ENCODE measurements at regions of chr19 and their contacts with region 1.

Region 1: GRCh38 chr19:44954824-44955586 is at the start of gene CLPTM1:
- DNase-seq: peak; percentile 91
- ATAC-seq: peak; percentile 85
- H3K4me3 ChIP-seq: peak within 1 kb of the TSS; percentile 93 to 100 (median 99)
- H3K27ac ChIP-seq: peak within 1 kb of the TSS; percentile 91
- H3K4me1 ChIP-seq: peaks cover 71% of the 10 kb centered on the region
- H3K27me3 ChIP-seq: no peaks in the 10 kb centered on the region; a peak in 1 of 5 replicates
- CTCF ChIP-seq: 0 out of 2 replicates have a peak, but pooled peaks have one; percentile 16
- EP300 ChIP-seq: peak in 1 of 2 experiments; percentile 5; a peak in 1 of 4 replicates
- POLR2A ChIP-seq: peak; percentile 77 to 85
- RAD21 ChIP-seq: no peak
- total RNA-seq, gene CLPTM1: 15.3 and 34.9 TPM in 2 replicates

Region 2: GRCh38 chr19:44845612-44846454 is 109.2 kb before region 1 on chr19 and contains the start of gene NECTIN2:
- CTCF ChIA-PET with region 1: no interaction called
- POLR2A ChIA-PET with region 1: interaction called, 6 read pairs
- in situ Hi-C with region 1: no loop called
- intact Hi-C with region 1: loop called (anchors 10 kb)
- DNase-seq: peak; percentile 95
- ATAC-seq: peak; percentile 61
- H3K4me3 ChIP-seq: peak within 1 kb of the TSS; percentile 76 to 95 (median 84)
- H3K27ac ChIP-seq: peak within 1 kb of the TSS; percentile 95
- H3K4me1 ChIP-seq: peaks cover 48% of the 10 kb centered on the region
- H3K27me3 ChIP-seq: no peaks in the 10 kb centered on the region; a peak in 1 of 5 replicates
- CTCF ChIP-seq: peak; percentile 94
- EP300 ChIP-seq: no peak
- POLR2A ChIP-seq: peak; percentile 62 to 87
- RAD21 ChIP-seq: peak; percentile 30; the same call in 1 of the 2 replicates
- total RNA-seq, gene NECTIN2: 32.7 and 75.4 TPM in 2 replicates

Region 3: DNA sequence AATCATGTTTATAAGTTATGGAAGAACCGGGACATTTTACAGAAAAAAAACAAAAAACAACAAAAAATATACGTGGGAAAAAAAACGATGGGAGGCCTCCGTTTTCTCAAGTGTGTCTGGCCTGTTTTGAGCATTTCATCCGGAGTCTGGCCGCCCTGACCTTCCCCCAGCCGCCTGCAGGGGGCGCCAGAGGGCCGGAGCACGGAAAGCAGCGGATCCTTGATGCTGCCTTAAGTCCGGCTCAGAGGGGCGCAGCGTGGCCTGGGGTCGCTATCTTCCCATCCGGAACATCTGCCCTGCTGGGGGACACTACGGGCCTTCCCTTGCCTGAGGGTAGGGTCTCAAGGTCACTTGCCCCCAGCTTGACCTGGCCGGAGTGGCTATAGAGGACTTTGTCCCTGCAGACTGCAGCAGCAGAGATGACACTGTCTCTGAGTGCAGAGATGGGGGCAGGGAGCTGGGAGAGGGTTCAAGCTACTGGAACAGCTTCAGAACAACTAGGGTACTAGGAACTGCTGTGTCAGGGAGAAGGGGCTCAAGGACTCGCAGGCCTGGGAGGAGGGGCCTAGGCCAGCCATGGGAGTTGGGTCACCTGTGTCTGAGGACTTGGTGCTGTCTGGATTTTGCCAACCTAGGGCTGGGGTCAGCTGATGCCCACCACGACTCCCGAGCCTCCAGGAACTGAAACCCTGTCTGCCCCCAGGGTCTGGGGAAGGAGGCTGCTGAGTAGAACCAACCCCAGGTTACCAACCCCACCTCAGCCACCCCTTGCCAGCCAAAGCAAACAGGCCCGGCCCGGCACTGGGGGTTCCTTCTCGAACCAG is 51.2 kb before region 1 on chr19:
- CTCF ChIA-PET with region 1: interaction called, 51 read pairs
- POLR2A ChIA-PET with region 1: interaction called, 91 read pairs
- in situ Hi-C with region 1: no loop called
- intact Hi-C with region 1: loop called (anchors 1 kb)
- DNase-seq: peak; percentile 80
- ATAC-seq: peak; percentile 50
- H3K4me3 ChIP-seq: peak overlapping the region; percentile 7 to 93 (median 7); a peak in 4 of 6 replicates
- H3K27ac ChIP-seq: peak overlapping the region; percentile 90
- H3K4me1 ChIP-seq: peaks cover 45% of the 10 kb centered on the region
- H3K27me3 ChIP-seq: no peaks in the 10 kb centered on the region; a peak in 1 of 5 replicates
- CTCF ChIP-seq: peak; percentile 98
- EP300 ChIP-seq: peak in 1 of 2 experiments; percentile 53; a peak in 1 of 4 replicates
- POLR2A ChIP-seq: peak; percentile 32 to 62
- RAD21 ChIP-seq: peak; percentile 95

Region 4: GRCh38 chr19:44912854-44913253 is 42.2 kb before region 1 on chr19:
- CTCF ChIA-PET with region 1: interaction called, 45 read pairs
- POLR2A ChIA-PET with region 1: interaction called, 55 read pairs
- in situ Hi-C with region 1: no loop called
- intact Hi-C with region 1: loop called (anchors 1 kb)
- DNase-seq: peak; percentile 72
- ATAC-seq: peak; percentile 16
- H3K4me3 ChIP-seq: peak overlapping the region in 1 of 3 experiments; percentile 77; a peak in 2 of 6 replicates
- H3K27ac ChIP-seq: peak overlapping the region; percentile 88
- H3K4me1 ChIP-seq: peaks cover 66% of the 10 kb centered on the region
- H3K27me3 ChIP-seq: no peaks in the 10 kb centered on the region
- CTCF ChIP-seq: no peak
- EP300 ChIP-seq: peak in 1 of 2 experiments; percentile 79; a peak in 2 of 4 replicates
- POLR2A ChIP-seq: 0 out of 4 replicates have a peak, but pooled peaks of 1 of the 2 experiments have one; percentile 31
- RAD21 ChIP-seq: peak; percentile 40

Region 5: GRCh38 chr19:44925114-44925891 is 29.7 kb before region 1 on chr19:
- CTCF ChIA-PET with region 1: no interaction called
- POLR2A ChIA-PET with region 1: interaction called, 52 read pairs
- in situ Hi-C with region 1: no loop called
- intact Hi-C with region 1: no loop called
- DNase-seq: peak; percentile 95
- ATAC-seq: peak; percentile 64
- H3K4me3 ChIP-seq: peak overlapping the region in 1 of 3 experiments; percentile 50; a peak in 2 of 6 replicates
- H3K27ac ChIP-seq: peak overlapping the region; percentile 96
- H3K4me1 ChIP-seq: peaks cover 93% of the 10 kb centered on the region
- H3K27me3 ChIP-seq: no peaks in the 10 kb centered on the region
- CTCF ChIP-seq: peak; percentile 43
- EP300 ChIP-seq: peak; percentile 88 to 97
- POLR2A ChIP-seq: peak in 1 of 2 experiments; percentile 16; a peak in 1 of 4 replicates
- RAD21 ChIP-seq: peak; percentile 55

Measured in HepG2 (cell line).